Sigmoid colon (tissue), 7 donors: ENCODE measurements at regions of chr19 and their contacts with region 1.

Region 1: GRCh38 chr19:57320180-57321084 is at the start of gene ZNF543:
- DNase-seq: peak; percentile 98
- H3K4me3 ChIP-seq: peak within 1 kb of the TSS; percentile 64 to 94 (median 68)
- H3K27ac ChIP-seq: peak within 1 kb of the TSS; percentile 83 to 92 (median 85)
- H3K4me1 ChIP-seq: peaks cover 0 to 24% (median 15%) of the 10 kb centered on the region in 4 donors
- H3K27me3 ChIP-seq: no peaks in the 10 kb centered on the region
- CTCF ChIP-seq: no peak
- EP300 ChIP-seq: no peak
- POLR2A ChIP-seq: peak; percentile 44 to 65
- total RNA-seq, gene ZNF543: 5.4 to 8.1 (median 7.5) TPM

Region 2: GRCh38 chr19:57171551-57172081 is 148.8 kb before region 1 on chr19:
- intact Hi-C with region 1: no loop called
- DNase-seq: peak; percentile 76
- H3K4me3 ChIP-seq: peak overlapping the region; percentile 23 to 47 (median 42)
- H3K27ac ChIP-seq: peak overlapping the region; percentile 69 to 77 (median 72)
- H3K4me1 ChIP-seq: peaks cover 0 to 8% (median 4%) of the 10 kb centered on the region in 4 donors
- H3K27me3 ChIP-seq: no peaks in the 10 kb centered on the region
- CTCF ChIP-seq: no peak
- EP300 ChIP-seq: no peak
- POLR2A ChIP-seq: no peak

Region 3: GRCh38 chr19:57279418-57280066 is 40.9 kb before region 1 on chr19:
- intact Hi-C with region 1: loop called (anchors 2 kb)
- DNase-seq: peak; percentile 96
- H3K4me3 ChIP-seq: peak overlapping the region; percentile 82 to 97 (median 84)
- H3K27ac ChIP-seq: peak overlapping the region; percentile 95 to 100 (median 98)
- H3K4me1 ChIP-seq: peaks cover 0 to 44% (median 30%) of the 10 kb centered on the region in 4 donors
- H3K27me3 ChIP-seq: no peaks in the 10 kb centered on the region
- CTCF ChIP-seq: no peak
- EP300 ChIP-seq: peak in 2 of 4 donors; percentile 82 to 85
- POLR2A ChIP-seq: no peak